ENCODE measurements at regions of chr20 and their contacts with region 1.

Region 1: GRCh38 chr20:41213150-41213820 is 75.9 kb downstream of the PLCG1 start:
- DNase-seq: peak; percentile 48
- ATAC-seq: peak; percentile 98
- H3K4me3 ChIP-seq: no peak overlapping the region
- H3K27ac ChIP-seq: no peak overlapping the region
- H3K4me1 ChIP-seq: peaks cover 5% of the 10 kb centered on the region
- H3K27me3 ChIP-seq: no peaks in the 10 kb centered on the region
- CTCF ChIP-seq: no peak
- POLR2A ChIP-seq: no peak
- RAD21 ChIP-seq: no peak

Region 2: GRCh38 chr20:41149679-41150131 is 63.6 kb before region 1 on chr20:
- CTCF ChIA-PET with region 1: no interaction called
- POLR2A ChIA-PET with region 1: no interaction called
- dilution Hi-C with region 1: no loop called
- in situ Hi-C with region 1: no loop called
- intact Hi-C with region 1: no loop called
- DNase-seq: peak; percentile 71
- ATAC-seq: peak; percentile 57; the same call in 1 of the 2 replicates
- H3K4me3 ChIP-seq: no peak overlapping the region
- H3K27ac ChIP-seq: no peak overlapping the region
- H3K4me1 ChIP-seq: peaks cover 6% of the 10 kb centered on the region
- H3K27me3 ChIP-seq: no peaks in the 10 kb centered on the region
- CTCF ChIP-seq: no peak
- POLR2A ChIP-seq: no peak
- RAD21 ChIP-seq: no peak

Region 3: GRCh38 chr20:41499961-41500725 is 286.9 kb after region 1 on chr20:
- CTCF ChIA-PET with region 1: no interaction called
- POLR2A ChIA-PET with region 1: interaction called, 10 read pairs
- dilution Hi-C with region 1: no loop called
- in situ Hi-C with region 1: no loop called
- intact Hi-C with region 1: no loop called
- DNase-seq: no peak
- ATAC-seq: no peak; the same call in 1 of the 2 replicates
- H3K4me3 ChIP-seq: no peak overlapping the region
- H3K27ac ChIP-seq: no peak overlapping the region
- H3K4me1 ChIP-seq: peaks cover 7% of the 10 kb centered on the region
- H3K27me3 ChIP-seq: no peaks in the 10 kb centered on the region
- CTCF ChIP-seq: no peak
- POLR2A ChIP-seq: no peak
- RAD21 ChIP-seq: no peak